Prostate gland (tissue), 2 donors: ENCODE measurements at regions of chr3 and their contacts with region 1.

Region 1: GRCh38 chr3:89212619-89213018 is 105.2 kb downstream of the EPHA3 start:
- DNase-seq: no peak
- H3K4me3 ChIP-seq: no peak overlapping the region
- H3K27ac ChIP-seq: no peak overlapping the region
- H3K4me1 ChIP-seq: no peaks in the 10 kb centered on the region
- H3K27me3 ChIP-seq: no peaks in the 10 kb centered on the region
- CTCF ChIP-seq: no peak
- POLR2A ChIP-seq: no peak

Region 2: DNA sequence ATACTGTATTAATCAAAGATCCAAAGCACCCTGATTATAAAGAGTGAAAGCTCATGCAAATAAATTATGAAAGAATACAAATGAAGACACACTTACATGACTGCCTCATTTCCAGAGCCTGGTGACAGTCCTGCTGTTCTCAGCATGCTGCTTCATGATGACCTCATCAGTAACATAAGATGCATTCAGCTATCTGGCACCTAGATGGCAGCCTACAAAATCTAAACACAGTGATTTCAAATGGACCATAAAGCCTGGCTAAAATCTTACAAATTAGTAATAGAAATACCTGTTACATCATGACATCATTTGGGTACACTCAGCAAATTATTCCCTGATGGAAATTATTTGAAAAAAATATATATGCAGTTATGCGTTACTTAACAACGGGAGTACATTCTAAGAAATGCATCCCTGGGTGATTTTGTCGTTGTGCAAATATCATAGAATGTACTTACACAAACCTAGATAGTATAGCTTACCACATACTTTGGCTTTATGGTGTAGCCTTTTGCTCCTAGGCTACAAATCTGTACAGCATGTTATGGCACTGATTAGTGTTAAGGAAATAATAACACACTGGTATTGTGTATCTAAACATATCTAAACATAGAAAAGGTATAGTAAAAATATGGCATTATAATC is 102.0 kb after region 1 on chr3:
- intact Hi-C with region 1: loop called (anchors 5 kb)
- DNase-seq: no peak
- H3K4me3 ChIP-seq: no peak overlapping the region
- H3K27ac ChIP-seq: no peak overlapping the region
- H3K4me1 ChIP-seq: no peaks in the 10 kb centered on the region
- H3K27me3 ChIP-seq: no peaks in the 10 kb centered on the region
- CTCF ChIP-seq: peak in 1 of 4 experiments; percentile 4
- POLR2A ChIP-seq: no peak